ENCODE measurements at regions of chr11 and their contacts with region 1.

Region 1: GRCh38 chr11:65859200-65859811 is 927 bp upstream of the MUS81 start:
- DNase-seq: peak; percentile 99
- ATAC-seq: peak; percentile 73
- H3K4me3 Mint-ChIP-seq: peak overlapping the region; percentile 91
- H3K27ac Mint-ChIP-seq: peak overlapping the region; percentile 99
- H3K4me1 Mint-ChIP-seq: peaks cover 42% of the 10 kb centered on the region
- H3K27me3 Mint-ChIP-seq: no peaks in the 10 kb centered on the region

Region 2: DNA sequence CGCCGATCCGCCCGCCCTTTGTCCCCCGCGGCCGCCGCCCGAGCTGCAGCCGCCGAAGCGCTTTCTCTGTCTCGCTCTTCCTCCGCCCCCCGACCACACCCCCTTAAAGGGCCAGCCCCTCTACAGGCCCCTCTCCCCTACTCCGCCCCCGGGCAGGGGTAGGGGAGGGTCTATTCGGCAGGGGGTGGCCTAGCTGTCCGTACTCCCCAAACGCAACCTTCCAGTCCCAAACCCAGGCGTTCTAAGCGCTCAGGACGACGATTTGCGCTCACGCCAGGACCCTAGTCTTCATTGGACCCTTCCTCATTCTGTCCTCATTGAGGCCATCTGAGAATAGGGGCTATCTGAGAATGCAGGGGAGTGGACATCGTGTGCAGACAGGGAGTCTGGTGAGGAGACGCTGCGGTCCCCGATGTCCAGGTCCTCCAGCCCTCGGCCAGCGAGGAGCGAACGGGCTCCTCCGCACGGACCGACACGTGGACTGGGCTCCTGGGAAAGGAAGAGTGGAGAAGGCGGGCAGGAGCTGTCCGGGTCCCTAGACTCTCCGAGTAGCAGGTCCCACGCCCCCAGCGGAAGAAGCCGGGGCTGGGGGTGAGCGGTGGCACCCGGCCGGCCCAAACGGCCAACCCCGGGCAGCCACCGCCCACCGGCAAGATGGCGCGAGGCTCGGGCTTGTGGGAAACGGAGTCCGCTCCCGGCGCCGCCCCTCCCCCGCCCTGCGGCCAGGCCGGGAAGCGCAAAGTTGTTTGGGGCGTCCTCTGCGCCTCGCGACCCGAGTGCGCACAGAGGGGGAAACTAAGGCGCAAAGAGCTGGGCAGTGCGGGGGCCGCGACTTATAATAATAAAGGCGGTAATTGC is 1612.2 kb before region 1 on chr11 and contains the start of gene PPP1R14B:
- CTCF ChIA-PET with region 1: no interaction called
- POLR2A ChIA-PET with region 1: no interaction called
- intact Hi-C with region 1: no loop called
- DNase-seq: peak; percentile 89
- ATAC-seq: peak; percentile 54
- H3K4me3 Mint-ChIP-seq: peak within 1 kb of the TSS; percentile 94
- H3K27ac Mint-ChIP-seq: peak within 1 kb of the TSS; percentile 92
- H3K4me1 Mint-ChIP-seq: peaks cover 34% of the 10 kb centered on the region
- H3K27me3 Mint-ChIP-seq: no peaks in the 10 kb centered on the region
- total RNA-seq, gene PPP1R14B: 261 to 267 TPM

Region 3: DNA sequence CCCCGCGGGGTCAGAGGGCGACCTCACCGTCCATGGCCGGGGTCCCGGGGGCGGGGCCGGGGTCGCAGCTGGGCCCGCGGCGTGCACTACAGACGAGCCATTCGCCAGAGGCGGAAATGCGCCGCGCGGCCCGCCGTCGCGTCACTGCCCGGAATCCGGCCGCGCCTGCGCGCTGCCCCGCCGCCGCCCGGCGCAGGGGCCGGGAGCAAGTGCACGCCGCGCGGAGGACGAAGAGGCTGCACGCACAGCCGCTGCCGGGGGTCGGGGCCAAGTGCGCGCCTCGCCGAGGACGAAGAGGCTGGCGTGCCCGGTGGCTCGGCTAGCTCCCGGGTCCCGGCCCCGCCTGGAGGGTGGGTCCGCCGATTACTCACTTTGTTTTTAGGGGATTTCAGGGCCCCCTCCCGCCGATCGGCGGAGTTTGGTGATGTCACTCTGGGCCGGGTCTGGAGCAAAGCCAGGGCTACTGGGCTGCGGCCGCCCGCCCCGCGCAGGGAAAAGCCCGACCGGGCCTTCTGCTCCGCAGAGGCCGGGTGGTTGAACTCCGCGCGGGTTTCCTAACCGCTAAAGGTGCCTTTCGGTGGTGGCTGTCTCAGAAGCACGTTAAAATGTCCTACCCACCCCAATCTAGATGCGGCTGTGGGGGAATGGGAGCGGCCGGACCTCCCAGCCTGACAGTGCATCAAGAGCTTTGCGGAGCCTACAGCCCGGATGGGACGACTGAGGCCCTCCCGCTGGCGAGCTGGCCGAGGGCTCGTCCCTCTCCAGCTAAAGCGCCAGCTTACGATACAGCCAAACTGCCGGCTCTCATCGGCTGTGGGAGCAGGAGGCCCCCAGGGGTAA is 196.3 kb before region 1 on chr11 and contains the start of gene RELA:
- CTCF ChIA-PET with region 1: interaction called, 3 read pairs
- POLR2A ChIA-PET with region 1: no interaction called
- intact Hi-C with region 1: loop called in 1 of 2 experiments (anchors 1 kb)
- DNase-seq: peak; percentile 96
- ATAC-seq: peak; percentile 90
- H3K4me3 Mint-ChIP-seq: peak within 1 kb of the TSS; percentile 88
- H3K27ac Mint-ChIP-seq: peak within 1 kb of the TSS; percentile 97
- H3K4me1 Mint-ChIP-seq: peaks cover 41% of the 10 kb centered on the region
- H3K27me3 Mint-ChIP-seq: no peaks in the 10 kb centered on the region
- total RNA-seq, gene RELA: 76.9 to 109 TPM

Region 4: GRCh38 chr11:65802841-65803240 is 56.5 kb before region 1 on chr11:
- CTCF ChIA-PET with region 1: no interaction called
- POLR2A ChIA-PET with region 1: no interaction called
- intact Hi-C with region 1: no loop called
- DNase-seq: no peak
- ATAC-seq: no peak
- H3K4me3 Mint-ChIP-seq: no peak overlapping the region
- H3K27ac Mint-ChIP-seq: no peak overlapping the region
- H3K4me1 Mint-ChIP-seq: no peaks in the 10 kb centered on the region
- H3K27me3 Mint-ChIP-seq: peaks cover 19% of the 10 kb centered on the region

Region 5: GRCh38 chr11:65817835-65818742 is 41.2 kb before region 1 on chr11:
- CTCF ChIA-PET with region 1: interaction called, 4 read pairs
- POLR2A ChIA-PET with region 1: no interaction called
- intact Hi-C with region 1: loop called in 1 of 2 experiments (anchors 1 kb)
- DNase-seq: peak; percentile 98
- ATAC-seq: peak; percentile 91
- H3K4me3 Mint-ChIP-seq: peak overlapping the region; percentile 74
- H3K27ac Mint-ChIP-seq: peak overlapping the region; percentile 87
- H3K4me1 Mint-ChIP-seq: peaks cover 14% of the 10 kb centered on the region
- H3K27me3 Mint-ChIP-seq: no peaks in the 10 kb centered on the region

Region 6: DNA sequence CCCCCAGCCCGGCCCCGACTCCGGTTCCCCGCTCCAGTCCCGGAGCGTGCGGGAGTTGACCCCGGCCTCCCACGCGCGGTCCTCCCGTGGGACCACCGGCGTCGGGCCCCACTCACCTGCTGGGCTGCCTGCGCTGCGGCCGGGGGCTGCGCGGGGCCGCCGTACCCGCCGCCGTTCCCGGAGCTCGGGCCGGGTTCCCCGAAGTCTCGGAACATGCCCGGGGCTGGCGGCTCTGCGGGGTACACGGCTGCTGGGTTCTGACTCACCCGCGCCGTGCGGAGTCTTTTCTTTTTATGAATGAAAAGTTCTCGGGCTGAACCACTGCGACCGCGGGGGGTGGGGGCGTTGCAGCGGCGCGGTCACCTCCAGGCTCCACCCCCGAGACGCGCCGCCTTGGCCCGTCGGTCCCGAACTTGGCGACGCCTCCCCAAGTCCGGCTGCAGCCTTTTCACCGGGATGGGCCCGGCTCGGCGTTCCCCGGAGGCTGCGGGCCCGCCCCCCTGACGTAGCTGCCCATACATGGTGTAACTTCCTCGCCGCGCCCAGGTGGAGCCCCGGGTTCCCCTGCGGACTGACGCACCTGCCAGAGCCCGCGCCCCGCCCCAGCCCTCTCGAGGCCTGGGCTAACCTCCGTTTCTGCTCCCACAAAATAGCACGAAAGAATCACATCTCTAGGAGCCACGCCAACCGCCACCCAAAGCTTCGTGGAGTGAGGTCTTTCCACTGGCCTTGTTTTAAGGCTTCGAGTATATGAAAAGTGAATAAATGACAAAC is 41.0 kb after region 1 on chr11 and contains the start of gene FOSL1:
- CTCF ChIA-PET with region 1: interaction called, 13 read pairs
- POLR2A ChIA-PET with region 1: interaction called, 3 read pairs
- intact Hi-C with region 1: loop called in 1 of 2 experiments (anchors 1 kb)
- DNase-seq: peak; percentile 98
- ATAC-seq: peak; percentile 85
- H3K4me3 Mint-ChIP-seq: peak within 1 kb of the TSS; percentile 75
- H3K27ac Mint-ChIP-seq: peak within 1 kb of the TSS; percentile 78
- H3K4me1 Mint-ChIP-seq: peaks cover 35% of the 10 kb centered on the region
- H3K27me3 Mint-ChIP-seq: peaks cover 4% of the 10 kb centered on the region
- total RNA-seq, gene FOSL1: 11.1 to 11.3 TPM

Region 7: GRCh38 chr11:65988791-65989592 is 129.7 kb after region 1 on chr11:
- CTCF ChIA-PET with region 1: interaction called, 5 read pairs
- POLR2A ChIA-PET with region 1: no interaction called
- intact Hi-C with region 1: loop called in 1 of 2 experiments (anchors 2 kb)
- DNase-seq: peak; percentile 95
- ATAC-seq: peak; percentile 99
- H3K4me3 Mint-ChIP-seq: no peak overlapping the region
- H3K27ac Mint-ChIP-seq: peak overlapping the region; percentile 59
- H3K4me1 Mint-ChIP-seq: peaks cover 2% of the 10 kb centered on the region
- H3K27me3 Mint-ChIP-seq: no peaks in the 10 kb centered on the region

Region 8: GRCh38 chr11:66288671-66289547 is 429.6 kb after region 1 on chr11 and contains the start of gene YIF1A:
- CTCF ChIA-PET with region 1: no interaction called
- POLR2A ChIA-PET with region 1: no interaction called
- intact Hi-C with region 1: loop called in 1 of 2 experiments (anchors 1 kb)
- DNase-seq: peak; percentile 99
- ATAC-seq: peak; percentile 97
- H3K4me3 Mint-ChIP-seq: peak within 1 kb of the TSS; percentile 89
- H3K27ac Mint-ChIP-seq: peak within 1 kb of the TSS; percentile 85
- H3K4me1 Mint-ChIP-seq: peaks cover 22% of the 10 kb centered on the region
- H3K27me3 Mint-ChIP-seq: peaks cover 8% of the 10 kb centered on the region
- total RNA-seq, gene YIF1A: 47.5 to 49.8 TPM

Measured in activated CD4-positive, alpha-beta T cell treated with anti-CD3 and anti-CD28 coated beads for 36 hours (primary cell).